A673 (cell line): ENCODE measurements at regions of chr7 and their contacts with region 1.

Region 1: GRCh38 chr7:69032848-69033247 is 565.4 kb upstream of the AUTS2 start:
- DNase-seq: no peak
- H3K4me3 ChIP-seq: no peak overlapping the region
- H3K27ac ChIP-seq: no peak overlapping the region
- H3K4me1 ChIP-seq: no peaks in the 10 kb centered on the region
- H3K27me3 ChIP-seq: no peaks in the 10 kb centered on the region
- CTCF ChIP-seq: no peak

Region 2: GRCh38 chr7:68785036-68785435 is 247.8 kb before region 1 on chr7:
- CTCF ChIA-PET with region 1: interaction called, 13 read pairs
- POLR2A ChIA-PET with region 1: no interaction called
- intact Hi-C with region 1: no loop called
- DNase-seq: no peak
- H3K4me3 ChIP-seq: no peak overlapping the region
- H3K27ac ChIP-seq: no peak overlapping the region
- H3K4me1 ChIP-seq: no peaks in the 10 kb centered on the region
- H3K27me3 ChIP-seq: no peaks in the 10 kb centered on the region
- CTCF ChIP-seq: no peak

Region 3: GRCh38 chr7:69338144-69338543 is 305.3 kb after region 1 on chr7:
- CTCF ChIA-PET with region 1: no interaction called
- POLR2A ChIA-PET with region 1: no interaction called
- intact Hi-C with region 1: no loop called
- DNase-seq: no peak
- H3K4me3 ChIP-seq: no peak overlapping the region
- H3K27ac ChIP-seq: no peak overlapping the region
- H3K4me1 ChIP-seq: no peaks in the 10 kb centered on the region
- H3K27me3 ChIP-seq: no peaks in the 10 kb centered on the region
- CTCF ChIP-seq: no peak